ENCODE measurements at regions of chr1 and their contacts with region 1.

Region 1: GRCh38 chr1:205961405-205961804 is 18.1 kb upstream of the SLC26A9 start:
- DNase-seq: peak in 2 of 4 donors; percentile 22 to 32
- ATAC-seq: peak; percentile 53
- H3K4me3 ChIP-seq: no peak overlapping the region
- H3K27ac ChIP-seq: peak overlapping the region in 2 of 4 donors; percentile 45 to 58
- H3K4me1 ChIP-seq: peaks cover 14% of the 10 kb centered on the region
- H3K27me3 ChIP-seq: no peaks in the 10 kb centered on the region
- CTCF ChIP-seq: no peak
- POLR2A ChIP-seq: no peak

Region 2: DNA sequence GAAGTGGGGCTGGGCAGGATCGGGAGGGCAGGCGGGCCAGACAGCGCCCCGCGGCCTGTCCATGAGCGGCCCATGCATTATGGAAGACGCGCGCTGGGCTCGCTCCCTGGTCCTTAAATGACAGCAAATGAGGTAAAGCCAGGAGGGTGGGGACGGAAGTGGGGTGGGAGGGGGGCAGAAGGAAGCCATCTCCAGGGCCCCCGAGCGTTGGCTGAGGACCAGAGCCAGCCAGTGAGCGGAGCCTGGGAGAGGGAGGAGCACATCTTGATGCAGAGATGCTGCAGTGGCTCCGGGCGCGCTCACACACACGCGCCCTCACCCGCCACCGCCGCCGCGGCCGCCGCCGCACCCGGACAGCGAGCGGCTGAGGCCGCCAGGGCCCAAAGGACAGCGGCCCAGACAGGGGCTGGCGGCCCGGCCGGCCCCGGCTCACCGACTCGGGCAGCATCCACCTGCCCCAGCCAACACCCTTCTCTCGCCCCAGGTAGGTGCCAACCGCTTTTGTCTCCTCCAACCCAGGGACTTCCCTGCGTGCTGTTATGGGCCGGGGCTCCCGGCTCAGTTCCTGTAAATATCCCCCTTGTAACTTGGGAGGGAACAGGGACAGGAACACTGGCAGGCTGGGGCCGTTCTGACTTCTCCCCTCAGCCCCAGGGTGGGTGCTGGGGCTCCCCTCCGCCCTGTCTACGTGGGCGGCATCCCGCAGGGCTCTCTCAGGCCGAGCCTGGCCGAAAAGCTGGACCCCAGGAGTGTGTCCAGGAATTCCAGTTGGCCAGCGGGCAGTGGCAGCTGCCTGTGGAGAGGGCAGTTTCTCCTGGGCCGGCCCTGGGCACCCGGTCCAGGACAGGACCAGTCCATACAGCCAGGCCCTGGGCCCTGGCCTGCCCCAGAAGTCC is 918.2 kb before region 1 on chr1 and contains the start of gene CNTN2:
- intact Hi-C with region 1: no loop called
- DNase-seq: no peak
- ATAC-seq: no peak
- H3K4me3 ChIP-seq: no peak within 1 kb of the TSS
- H3K27ac ChIP-seq: no peak within 1 kb of the TSS
- H3K4me1 ChIP-seq: no peaks in the 10 kb centered on the region
- H3K27me3 ChIP-seq: peaks cover 0 to 3% of the 10 kb centered on the region in 2 donors
- CTCF ChIP-seq: no peak
- POLR2A ChIP-seq: no peak
- total RNA-seq, gene CNTN2: not detected

Region 3: DNA sequence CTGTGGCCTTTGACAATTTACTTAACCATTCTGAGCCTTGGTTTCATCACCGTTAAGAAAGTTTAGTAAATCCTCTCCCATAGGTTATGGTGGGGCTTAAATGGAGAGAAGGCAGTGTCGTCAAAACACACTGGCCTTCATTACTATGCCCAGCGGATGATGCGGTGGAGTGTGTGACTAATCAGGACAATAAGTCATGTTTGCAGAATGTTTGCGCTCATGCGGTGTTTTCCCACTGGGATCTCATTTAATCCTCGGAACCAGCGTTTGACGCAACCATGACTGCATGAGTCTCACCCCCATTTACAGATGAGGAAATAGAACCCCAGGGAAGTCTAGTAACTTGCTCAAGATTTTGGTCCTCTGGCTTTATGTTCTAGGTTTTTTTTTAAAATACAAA is 35.7 kb before region 1 on chr1:
- intact Hi-C with region 1: loop called (anchors 5 kb)
- DNase-seq: no peak
- ATAC-seq: no peak
- H3K4me3 ChIP-seq: no peak overlapping the region
- H3K27ac ChIP-seq: no peak overlapping the region
- H3K4me1 ChIP-seq: peaks cover under 1% of the 10 kb centered on the region
- H3K27me3 ChIP-seq: no peaks in the 10 kb centered on the region
- CTCF ChIP-seq: no peak
- POLR2A ChIP-seq: no peak

Measured in body of pancreas (tissue), 4 donors.